Kidney (tissue), 22 donors: ENCODE measurements at regions of chr16 and their contacts with region 1.

Region 1: DNA sequence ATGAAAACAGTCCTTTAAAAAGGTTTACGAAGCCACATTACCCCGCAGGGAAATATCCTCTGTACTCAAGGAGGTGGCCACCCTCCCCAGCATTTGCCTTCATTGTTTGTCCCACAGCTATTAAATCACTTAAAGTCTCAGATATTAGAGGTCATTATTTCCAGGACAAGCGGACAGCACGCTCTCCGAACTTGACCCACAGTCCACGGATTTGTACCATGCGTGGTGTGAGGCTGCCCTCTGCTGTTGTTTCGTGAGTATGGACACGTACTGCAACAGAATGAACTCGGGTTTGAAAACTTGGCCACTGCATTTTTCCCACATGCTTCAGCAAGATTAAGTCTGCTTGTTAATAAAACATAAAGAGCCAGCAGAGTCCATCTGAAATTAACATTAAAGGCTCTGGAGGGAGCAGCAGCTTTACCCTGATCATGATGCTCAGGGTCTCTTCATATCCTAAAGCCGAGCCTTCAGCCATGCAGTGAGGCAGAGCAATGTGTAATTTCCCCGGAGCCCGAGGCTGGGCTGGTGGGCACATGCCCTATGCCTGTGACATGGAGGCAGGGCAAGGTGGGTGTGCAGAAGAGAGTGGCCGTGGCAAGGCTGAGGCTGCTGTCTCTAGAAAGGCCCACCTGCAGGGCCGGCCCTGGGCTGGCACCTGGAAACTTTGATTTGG is 19.7 kb downstream of the MEAK7 start:
- DNase-seq: peak in 4 of 5 donors; percentile 68 to 83 (median 74)
- H3K4me3 ChIP-seq: no peak overlapping the region
- H3K27ac ChIP-seq: no peak overlapping the region
- H3K4me1 ChIP-seq: peaks cover 0 to 4% (median 0%) of the 10 kb centered on the region in 3 donors
- H3K27me3 ChIP-seq: no peaks in the 10 kb centered on the region
- CTCF ChIP-seq: peak; percentile 90

Region 2: GRCh38 chr16:84277237-84277823 is 207.4 kb before region 1 on chr16:
- intact Hi-C with region 1: loop called (anchors 10 kb)
- DNase-seq: peak; percentile 60 to 84 (median 79)
- H3K4me3 ChIP-seq: no peak overlapping the region
- H3K27ac ChIP-seq: no peak overlapping the region
- H3K4me1 ChIP-seq: no peaks in the 10 kb centered on the region
- H3K27me3 ChIP-seq: no peaks in the 10 kb centered on the region
- CTCF ChIP-seq: peak; percentile 88